ENCODE measurements at regions of chr1 and their contacts with region 1.

Region 1: GRCh38 chr1:21368515-21369289 is 71.2 kb upstream of the NBPF3 start:
- DNase-seq: peak; percentile 92
- H3K4me3 ChIP-seq: no peak overlapping the region
- H3K27ac ChIP-seq: no peak overlapping the region
- H3K4me1 ChIP-seq: peaks cover 7% of the 10 kb centered on the region
- H3K27me3 ChIP-seq: no peaks in the 10 kb centered on the region
- CTCF ChIP-seq: peak; percentile 97 to 98
- POLR2A ChIP-seq: no peak

Region 2: DNA sequence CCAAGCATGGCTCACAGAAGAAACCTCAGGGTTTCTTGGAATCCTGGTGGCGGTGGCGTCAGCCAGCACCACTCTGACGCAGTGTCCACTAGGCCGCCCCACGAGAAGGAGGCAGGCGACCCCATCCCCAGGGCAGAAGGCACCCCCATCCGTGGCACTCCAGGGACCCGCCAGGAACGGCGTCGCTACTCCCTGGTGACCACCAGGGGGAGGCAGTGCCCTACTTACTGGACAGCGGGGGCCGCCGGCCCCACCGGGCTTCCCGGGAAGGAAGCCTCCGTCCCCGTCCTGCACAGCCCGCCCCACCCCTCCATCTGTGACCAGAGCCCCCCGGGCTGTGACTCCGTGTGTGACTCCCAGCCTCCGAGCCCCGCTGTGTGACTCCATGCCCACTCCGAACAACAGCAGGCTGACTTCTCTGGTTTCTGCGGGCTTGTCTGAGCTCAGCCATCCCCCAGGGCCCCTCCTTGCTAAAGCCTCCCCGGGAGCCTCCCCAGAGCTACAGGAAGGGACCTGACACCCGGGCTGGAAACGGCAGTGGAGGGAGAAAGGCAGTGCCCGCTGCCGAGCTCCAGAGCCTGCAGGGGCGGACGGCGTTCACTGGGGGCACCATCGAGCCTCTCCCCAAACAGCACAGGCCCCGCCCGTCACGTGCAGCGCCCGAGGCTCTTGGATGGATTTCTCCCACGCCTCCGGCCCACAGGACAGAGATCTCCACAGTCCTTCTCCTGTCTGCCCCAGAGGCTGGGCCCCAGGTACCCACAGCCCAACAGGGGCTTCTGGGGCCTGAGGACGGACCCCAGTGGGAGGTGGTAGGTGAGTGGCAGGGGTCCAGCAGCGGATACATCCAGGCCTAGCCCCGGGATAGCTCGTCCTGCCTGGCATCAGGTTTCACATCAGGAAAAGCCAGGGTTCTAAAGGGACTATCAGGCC is 672.0 kb before region 1 on chr1:
- CTCF ChIA-PET with region 1: interaction called, 17 read pairs
- POLR2A ChIA-PET with region 1: no interaction called
- dilution Hi-C with region 1: no loop called
- intact Hi-C with region 1: loop called (anchors 1 kb)
- DNase-seq: peak; percentile 86
- H3K4me3 ChIP-seq: peak overlapping the region; percentile 34 to 45 (median 38)
- H3K27ac ChIP-seq: peak overlapping the region; percentile 44
- H3K4me1 ChIP-seq: peaks cover 4% of the 10 kb centered on the region
- H3K27me3 ChIP-seq: no peaks in the 10 kb centered on the region
- CTCF ChIP-seq: peak; percentile 65 to 96
- POLR2A ChIP-seq: no peak

Region 3: GRCh38 chr1:21058035-21058793 is 310.5 kb before region 1 on chr1:
- CTCF ChIA-PET with region 1: no interaction called
- POLR2A ChIA-PET with region 1: no interaction called
- dilution Hi-C with region 1: no loop called
- intact Hi-C with region 1: no loop called
- DNase-seq: no peak
- H3K4me3 ChIP-seq: no peak overlapping the region
- H3K27ac ChIP-seq: no peak overlapping the region
- H3K4me1 ChIP-seq: no peaks in the 10 kb centered on the region
- H3K27me3 ChIP-seq: no peaks in the 10 kb centered on the region
- CTCF ChIP-seq: no peak
- POLR2A ChIP-seq: no peak

Region 4: DNA sequence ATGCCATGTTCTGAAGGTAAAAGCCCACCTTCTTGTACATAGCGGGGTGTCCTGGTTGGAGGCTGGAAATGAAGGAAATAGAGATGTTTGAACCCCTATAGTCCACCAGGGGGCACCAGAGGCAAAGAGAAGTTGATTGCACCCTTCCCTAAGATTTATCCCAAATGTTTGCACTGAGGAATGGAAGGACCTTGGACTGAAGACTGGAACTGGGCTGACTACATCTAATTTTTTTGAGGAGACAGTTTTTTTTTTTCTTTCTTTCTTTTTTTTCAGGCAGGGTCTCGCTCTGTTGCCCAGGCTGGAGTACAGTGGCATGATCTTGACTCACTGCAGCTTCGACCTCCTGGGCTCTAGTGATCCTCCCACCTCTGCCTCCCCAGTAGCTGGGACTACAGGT is 136.7 kb before region 1 on chr1:
- CTCF ChIA-PET with region 1: interaction called, 155 read pairs
- POLR2A ChIA-PET with region 1: no interaction called
- dilution Hi-C with region 1: no loop called
- intact Hi-C with region 1: loop called (anchors 1 kb)
- DNase-seq: peak; percentile 67
- H3K4me3 ChIP-seq: no peak overlapping the region
- H3K27ac ChIP-seq: no peak overlapping the region
- H3K4me1 ChIP-seq: no peaks in the 10 kb centered on the region
- H3K27me3 ChIP-seq: no peaks in the 10 kb centered on the region
- CTCF ChIP-seq: peak; percentile 68 to 73
- POLR2A ChIP-seq: no peak

Region 5: GRCh38 chr1:21270086-21270689 is 98.5 kb before region 1 on chr1:
- CTCF ChIA-PET with region 1: interaction called, 58 read pairs
- POLR2A ChIA-PET with region 1: no interaction called
- dilution Hi-C with region 1: no loop called
- intact Hi-C with region 1: no loop called
- DNase-seq: peak; percentile 84
- H3K4me3 ChIP-seq: no peak overlapping the region
- H3K27ac ChIP-seq: no peak overlapping the region
- H3K4me1 ChIP-seq: peaks cover 60% of the 10 kb centered on the region
- H3K27me3 ChIP-seq: no peaks in the 10 kb centered on the region
- CTCF ChIP-seq: peak; percentile 98
- POLR2A ChIP-seq: no peak

Region 6: GRCh38 chr1:21334214-21335087 is 34.3 kb before region 1 on chr1:
- CTCF ChIA-PET with region 1: interaction called, 31 read pairs
- POLR2A ChIA-PET with region 1: interaction called, 3 read pairs
- dilution Hi-C with region 1: no loop called
- intact Hi-C with region 1: no loop called
- DNase-seq: peak; percentile 75
- H3K4me3 ChIP-seq: peak overlapping the region in 1 of 3 experiments; percentile 10
- H3K27ac ChIP-seq: peak overlapping the region; percentile 81
- H3K4me1 ChIP-seq: peaks cover 73% of the 10 kb centered on the region
- H3K27me3 ChIP-seq: no peaks in the 10 kb centered on the region
- CTCF ChIP-seq: peak; percentile 82 to 89
- POLR2A ChIP-seq: peak; percentile 43

Region 7: DNA sequence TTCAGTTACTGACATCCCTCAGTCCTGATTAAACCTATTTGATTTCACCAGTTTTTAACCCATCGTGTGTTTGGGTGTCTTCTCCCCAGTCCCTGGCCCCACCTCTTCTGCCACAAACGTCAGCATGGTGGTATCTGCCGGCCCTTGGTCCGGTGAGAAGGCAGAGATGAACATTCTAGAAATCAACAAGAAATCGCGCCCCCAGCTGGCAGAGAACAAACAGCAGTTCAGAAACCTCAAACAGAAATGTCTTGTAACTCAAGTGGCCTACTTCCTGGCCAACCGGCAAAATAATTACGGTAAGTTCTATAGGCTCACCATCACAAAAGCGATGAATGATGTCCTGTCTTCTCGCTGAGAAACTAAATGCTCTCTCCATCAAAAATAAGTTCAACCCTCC is 99.9 kb after region 1 on chr1:
- CTCF ChIA-PET with region 1: interaction called, 3 read pairs
- POLR2A ChIA-PET with region 1: no interaction called
- dilution Hi-C with region 1: no loop called
- intact Hi-C with region 1: loop called (anchors 1 kb)
- DNase-seq: peak; percentile 16
- H3K4me3 ChIP-seq: no peak overlapping the region
- H3K27ac ChIP-seq: no peak overlapping the region
- H3K4me1 ChIP-seq: no peaks in the 10 kb centered on the region
- H3K27me3 ChIP-seq: peaks cover 0 to 2% of the 10 kb centered on the region in 2 experiments
- CTCF ChIP-seq: peak; percentile 26 to 38
- POLR2A ChIP-seq: no peak

Region 8: GRCh38 chr1:21573971-21574465 is 205.3 kb after region 1 on chr1:
- CTCF ChIA-PET with region 1: interaction called, 11 read pairs
- POLR2A ChIA-PET with region 1: no interaction called
- dilution Hi-C with region 1: no loop called
- intact Hi-C with region 1: loop called (anchors 1 kb)
- DNase-seq: peak; percentile 99
- H3K4me3 ChIP-seq: no peak overlapping the region
- H3K27ac ChIP-seq: peak overlapping the region; percentile 87
- H3K4me1 ChIP-seq: peaks cover 17% of the 10 kb centered on the region
- H3K27me3 ChIP-seq: peaks cover 0 to 8% of the 10 kb centered on the region in 2 experiments
- CTCF ChIP-seq: peak; percentile 34 to 50
- POLR2A ChIP-seq: peak; percentile 31

Measured in endothelial cell of umbilical vein (primary cell).